ENCODE measurements at regions of chr12 and their contacts with region 1.

Region 1: DNA sequence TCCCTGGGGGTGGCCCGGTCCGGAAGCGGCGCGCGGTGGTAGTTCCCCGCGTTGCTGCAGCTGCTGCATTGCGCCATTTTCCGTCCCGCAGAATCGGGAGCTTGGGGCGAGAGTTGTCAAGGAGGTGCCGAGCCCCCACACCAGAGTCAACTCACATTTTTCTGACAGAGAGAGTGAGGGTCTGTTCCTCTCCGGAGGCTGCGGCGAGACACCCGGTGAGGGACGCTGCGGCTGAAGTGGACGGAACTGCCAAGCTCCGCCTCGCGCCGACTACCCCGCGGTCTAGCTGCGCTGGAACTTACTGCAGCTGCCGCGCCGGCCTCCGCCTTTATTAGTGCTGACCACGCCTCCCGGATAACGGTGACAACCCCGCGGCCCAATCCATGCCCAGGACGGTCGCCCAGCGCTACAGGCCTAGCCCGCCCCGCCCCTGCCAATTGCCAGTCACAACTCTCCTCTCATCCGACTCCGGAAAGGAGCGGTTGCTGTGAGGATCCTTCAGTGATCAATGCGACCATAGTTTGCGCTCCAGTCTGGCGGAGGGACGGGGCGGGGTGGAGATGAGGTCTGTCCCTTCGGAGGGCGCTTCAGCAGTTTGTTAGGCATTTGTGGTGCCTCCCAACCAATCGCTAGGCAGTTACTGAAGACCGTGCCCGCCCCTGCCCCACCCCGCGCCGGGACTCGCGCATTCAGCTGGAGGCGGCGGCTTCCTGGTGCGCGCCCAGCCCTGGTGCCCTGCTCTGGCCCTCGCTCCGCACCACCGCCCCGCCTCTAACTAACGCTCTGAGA is at the start of gene VAMP1:
- DNase-seq: peak; percentile 98
- H3K4me3 Mint-ChIP-seq: peak within 1 kb of the TSS; percentile 83
- H3K27ac Mint-ChIP-seq: peak within 1 kb of the TSS; percentile 57
- H3K4me1 Mint-ChIP-seq: peaks cover 18% of the 10 kb centered on the region
- H3K27me3 Mint-ChIP-seq: no peaks in the 10 kb centered on the region
- CTCF ChIP-seq: no peak
- total RNA-seq, gene VAMP1: 5.0 and 7.4 TPM in 2 replicates

Region 2: DNA sequence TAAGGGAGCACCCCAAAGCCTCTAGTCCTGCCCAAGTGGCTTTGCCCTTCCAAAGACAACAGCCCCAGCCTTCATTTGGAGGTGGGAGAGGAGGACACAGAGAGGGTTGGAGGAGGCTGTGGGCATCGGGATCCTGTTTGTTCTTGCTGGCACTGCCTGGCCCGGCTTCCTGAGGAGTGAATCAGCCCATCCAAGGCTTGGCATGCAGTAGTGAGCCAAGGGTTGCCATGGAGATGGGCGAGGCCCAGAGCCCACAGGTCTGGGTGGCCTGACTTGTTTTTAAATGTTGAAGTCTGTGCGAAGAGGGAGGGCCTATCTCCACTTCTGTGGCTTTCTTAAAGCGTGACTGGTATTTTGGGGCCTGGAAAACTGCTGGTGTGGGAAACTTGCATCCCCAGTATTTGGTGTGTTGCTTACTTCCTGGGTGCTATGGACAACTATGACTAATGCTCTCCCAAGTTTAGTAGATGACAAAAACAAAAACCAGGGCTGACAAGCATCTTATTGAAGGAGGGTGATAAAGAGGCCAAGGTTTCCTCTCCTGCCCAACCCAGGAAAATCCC is 254.6 kb before region 1 on chr12:
- CTCF ChIA-PET with region 1: no interaction called
- intact Hi-C with region 1: loop called (anchors 5 kb)
- DNase-seq: peak; percentile 96
- H3K4me3 Mint-ChIP-seq: peak overlapping the region; percentile 58
- H3K27ac Mint-ChIP-seq: peak overlapping the region; percentile 97
- H3K4me1 Mint-ChIP-seq: peaks cover 59% of the 10 kb centered on the region
- H3K27me3 Mint-ChIP-seq: no peaks in the 10 kb centered on the region
- CTCF ChIP-seq: no peak

Region 3: DNA sequence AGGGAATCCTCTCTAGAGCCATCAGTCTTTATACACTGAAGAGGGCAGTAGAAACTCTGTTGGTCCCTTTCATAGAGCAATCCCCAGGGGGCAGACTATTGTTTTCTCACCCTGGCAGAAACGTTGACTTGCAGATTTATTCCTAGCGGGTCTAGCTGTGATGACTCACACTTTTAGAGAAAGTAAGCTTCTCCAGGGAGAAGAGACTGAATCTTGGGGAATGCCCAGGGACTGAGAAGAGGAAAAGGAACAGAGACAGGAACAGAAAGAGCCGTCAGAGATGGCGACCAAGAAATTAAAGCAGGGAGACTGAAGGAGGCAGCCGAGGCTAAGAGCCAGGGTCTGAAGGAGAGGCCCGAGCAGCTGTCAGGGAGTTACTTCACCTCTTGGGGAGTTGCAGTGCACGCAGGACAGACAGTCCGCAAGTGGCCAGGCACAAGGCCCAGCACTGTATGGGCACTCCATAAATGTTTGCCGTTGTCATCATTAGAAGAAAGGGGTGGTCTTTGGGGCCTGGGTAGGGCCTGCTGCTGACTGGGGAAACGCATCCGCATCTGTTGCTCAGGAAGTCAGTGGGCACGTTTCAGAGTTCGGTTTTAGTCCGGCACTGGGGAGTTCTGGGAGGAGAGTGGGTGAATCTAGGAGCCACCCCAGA is 147.1 kb before region 1 on chr12:
- CTCF ChIA-PET with region 1: interaction called, 10 read pairs
- intact Hi-C with region 1: no loop called
- DNase-seq: peak; percentile 58
- H3K4me3 Mint-ChIP-seq: no peak overlapping the region
- H3K27ac Mint-ChIP-seq: peak overlapping the region; percentile 56
- H3K4me1 Mint-ChIP-seq: peaks cover 23% of the 10 kb centered on the region
- H3K27me3 Mint-ChIP-seq: no peaks in the 10 kb centered on the region
- CTCF ChIP-seq: peak; percentile 35

Region 4: GRCh38 chr12:6423267-6424007 is 47.1 kb before region 1 on chr12:
- CTCF ChIA-PET with region 1: interaction called, 14 read pairs
- intact Hi-C with region 1: loop called (anchors 1 kb)
- DNase-seq: peak; percentile 78
- H3K4me3 Mint-ChIP-seq: no peak overlapping the region
- H3K27ac Mint-ChIP-seq: no peak overlapping the region
- H3K4me1 Mint-ChIP-seq: peaks cover 5% of the 10 kb centered on the region
- H3K27me3 Mint-ChIP-seq: no peaks in the 10 kb centered on the region
- CTCF ChIP-seq: peak; percentile 76

Region 5: GRCh38 chr12:6563448-6564050 is 93.0 kb after region 1 on chr12:
- CTCF ChIA-PET with region 1: no interaction called
- intact Hi-C with region 1: no loop called
- DNase-seq: peak; percentile 70
- H3K4me3 Mint-ChIP-seq: no peak overlapping the region
- H3K27ac Mint-ChIP-seq: no peak overlapping the region
- H3K4me1 Mint-ChIP-seq: peaks cover 18% of the 10 kb centered on the region
- H3K27me3 Mint-ChIP-seq: no peaks in the 10 kb centered on the region
- CTCF ChIP-seq: peak; percentile 60

Region 6: DNA sequence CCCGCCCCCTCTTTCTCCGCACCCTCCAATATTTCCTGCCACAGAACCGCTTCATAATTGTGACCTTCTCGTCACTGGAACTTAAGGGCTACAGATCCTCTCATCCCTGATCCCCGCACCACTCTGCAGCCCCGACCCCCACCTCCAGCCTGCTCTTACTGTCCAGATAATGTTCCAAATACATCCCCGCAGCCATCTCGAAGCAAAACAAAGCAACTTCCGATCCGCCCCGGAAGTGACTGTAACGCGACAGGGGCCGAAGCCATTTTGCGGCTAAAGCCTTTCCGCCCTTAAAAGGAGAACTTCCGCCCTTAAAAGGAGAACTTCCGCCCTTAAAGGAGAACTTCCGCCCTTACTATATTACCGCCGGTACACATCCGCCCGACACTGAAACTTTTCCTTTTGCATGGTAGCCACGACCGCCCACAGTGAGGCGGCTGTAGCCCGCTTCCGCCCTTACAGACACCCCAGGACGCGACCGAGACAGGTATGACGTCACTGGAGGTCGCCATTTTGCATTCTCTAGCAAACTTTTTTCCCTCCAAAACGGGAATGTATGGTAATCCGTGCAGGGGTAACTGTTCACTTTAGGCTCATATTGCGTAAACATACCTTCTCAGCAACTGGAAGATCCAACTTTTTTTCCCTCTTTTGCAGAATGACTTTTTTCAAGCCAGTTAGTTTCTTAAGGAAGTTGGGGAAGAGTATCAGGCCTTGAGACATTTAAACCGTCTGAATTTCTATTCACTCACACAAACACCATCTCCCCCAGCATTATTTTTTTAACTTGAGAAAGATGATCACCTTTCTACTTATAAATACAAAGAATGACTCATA is 192.6 kb after region 1 on chr12 and contains the start of gene ING4:
- CTCF ChIA-PET with region 1: no interaction called
- intact Hi-C with region 1: no loop called
- DNase-seq: peak; percentile 94
- H3K4me3 Mint-ChIP-seq: peak within 1 kb of the TSS; percentile 86
- H3K27ac Mint-ChIP-seq: peak within 1 kb of the TSS; percentile 92
- H3K4me1 Mint-ChIP-seq: peaks cover 10% of the 10 kb centered on the region
- H3K27me3 Mint-ChIP-seq: no peaks in the 10 kb centered on the region
- CTCF ChIP-seq: no peak
- total RNA-seq, gene ING4: 24.9 and 26.6 TPM in 2 replicates